ENCODE measurements at regions of chr20 and their contacts with region 1.

Region 1: GRCh38 chr20:2713285-2713684 is 20.7 kb downstream of the EBF4 start:
- DNase-seq: no peak
- H3K4me3 ChIP-seq: no peak overlapping the region
- H3K4me3 Mint-ChIP-seq: no peak overlapping the region
- H3K27ac Mint-ChIP-seq: no peak overlapping the region
- H3K4me1 ChIP-seq: no peaks in the 10 kb centered on the region
- H3K4me1 Mint-ChIP-seq: no peaks in the 10 kb centered on the region
- H3K27me3 ChIP-seq: no peaks in the 10 kb centered on the region
- H3K27me3 Mint-ChIP-seq: peaks cover 3% of the 10 kb centered on the region
- CTCF ChIP-seq: peak; percentile 26 to 49

Region 2: DNA sequence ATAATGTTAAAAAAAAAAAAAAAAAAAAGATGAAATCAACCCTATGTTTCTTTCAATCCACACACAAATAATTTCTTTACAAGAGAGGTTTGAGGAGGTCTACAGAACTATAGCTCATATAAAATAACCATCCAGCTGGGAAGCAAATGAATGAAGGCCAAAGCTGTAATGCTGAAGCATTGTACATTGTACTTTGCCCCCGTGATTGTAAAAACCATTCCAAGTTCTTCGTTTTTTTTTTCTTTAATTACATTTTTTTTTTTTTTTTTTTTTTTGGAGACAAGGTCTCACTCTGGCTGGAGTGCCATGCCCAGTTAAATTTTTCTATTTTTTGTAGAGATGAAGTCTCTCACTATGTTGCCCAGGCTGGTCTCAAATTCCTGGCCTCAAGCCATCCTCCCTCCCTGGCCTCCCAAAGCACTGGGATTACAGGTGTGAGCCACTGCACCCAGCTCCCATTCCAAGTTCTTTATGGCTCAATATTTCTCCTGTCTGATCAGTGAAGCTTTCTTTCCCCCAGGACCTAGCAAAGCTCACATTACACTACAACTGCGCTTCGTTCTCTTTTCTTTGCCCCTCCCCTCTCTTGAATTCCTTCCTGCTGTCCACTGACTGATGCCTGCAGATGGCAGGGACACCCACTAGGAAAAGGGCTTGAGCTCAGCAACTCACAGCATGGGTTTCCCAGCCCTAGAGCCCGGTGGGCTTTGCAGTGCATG is 113.8 kb before region 1 on chr20:
- CTCF ChIA-PET with region 1: no interaction called
- POLR2A ChIA-PET with region 1: interaction called, 15 read pairs
- intact Hi-C with region 1: no loop called
- DNase-seq: no peak
- H3K4me3 ChIP-seq: no peak overlapping the region
- H3K4me3 Mint-ChIP-seq: no peak overlapping the region
- H3K27ac Mint-ChIP-seq: no peak overlapping the region
- H3K4me1 ChIP-seq: no peaks in the 10 kb centered on the region
- H3K4me1 Mint-ChIP-seq: peaks cover 7% of the 10 kb centered on the region
- H3K27me3 ChIP-seq: no peaks in the 10 kb centered on the region
- H3K27me3 Mint-ChIP-seq: no peaks in the 10 kb centered on the region
- CTCF ChIP-seq: no peak

Region 3: GRCh38 chr20:2687514-2687913 is 25.8 kb before region 1 on chr20:
- CTCF ChIA-PET with region 1: no interaction called
- POLR2A ChIA-PET with region 1: no interaction called
- intact Hi-C with region 1: no loop called
- DNase-seq: no peak
- H3K4me3 ChIP-seq: no peak overlapping the region
- H3K4me3 Mint-ChIP-seq: no peak overlapping the region
- H3K27ac Mint-ChIP-seq: no peak overlapping the region
- H3K4me1 ChIP-seq: peaks cover 6% of the 10 kb centered on the region
- H3K4me1 Mint-ChIP-seq: peaks cover 12% of the 10 kb centered on the region
- H3K27me3 ChIP-seq: peaks cover 1% of the 10 kb centered on the region
- H3K27me3 Mint-ChIP-seq: peaks cover 19% of the 10 kb centered on the region
- CTCF ChIP-seq: no peak

Region 4: DNA sequence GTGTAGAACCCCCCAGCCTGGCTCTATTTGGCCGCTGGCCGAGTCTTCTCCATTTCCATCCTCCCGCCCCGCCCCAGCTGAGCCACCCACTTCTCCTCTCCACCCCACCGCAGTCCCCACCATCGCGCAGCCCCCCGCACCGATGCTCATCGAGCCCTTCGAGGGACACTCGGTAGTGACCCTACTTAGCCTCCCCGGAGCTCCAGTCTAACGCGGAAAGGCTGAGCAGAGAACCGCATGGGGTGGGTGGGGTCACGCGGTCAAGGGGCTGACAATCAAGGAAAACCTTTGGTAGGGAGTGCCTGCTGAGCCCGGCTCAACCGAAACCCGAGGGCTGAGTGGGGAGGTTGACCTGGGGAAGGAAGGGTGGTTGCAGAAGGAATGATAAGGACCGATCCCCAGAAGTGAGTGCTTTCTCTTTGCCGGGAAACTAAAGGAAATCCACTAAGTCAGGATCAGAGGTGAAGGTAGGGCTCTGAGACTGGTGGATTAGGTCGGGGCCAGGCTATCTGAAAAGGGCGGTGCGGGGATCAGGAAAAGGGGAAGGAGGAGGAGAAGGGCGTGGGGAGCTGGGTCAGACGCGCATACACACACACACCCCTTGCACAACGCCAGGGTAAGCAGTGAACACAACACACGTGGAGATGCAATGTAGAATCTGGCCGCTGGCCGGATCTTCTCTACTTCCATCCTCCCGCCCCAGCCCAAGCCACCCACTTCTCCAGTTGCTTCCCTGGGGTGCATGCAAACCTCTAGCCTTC is 37.4 kb after region 1 on chr20:
- CTCF ChIA-PET with region 1: no interaction called
- POLR2A ChIA-PET with region 1: no interaction called
- intact Hi-C with region 1: loop called (anchors 2 kb)
- DNase-seq: peak; percentile 36 to 53
- H3K4me3 ChIP-seq: no peak overlapping the region
- H3K4me3 Mint-ChIP-seq: peak overlapping the region; percentile 29
- H3K27ac Mint-ChIP-seq: no peak overlapping the region
- H3K4me1 ChIP-seq: peaks cover 30% of the 10 kb centered on the region
- H3K4me1 Mint-ChIP-seq: peaks cover 21% of the 10 kb centered on the region
- H3K27me3 ChIP-seq: no peaks in the 10 kb centered on the region; the same call in 1 of the 2 replicates
- H3K27me3 Mint-ChIP-seq: no peaks in the 10 kb centered on the region
- CTCF ChIP-seq: no peak

Measured in Caco-2 (cell line).